ENCODE measurements at regions of chr4 and their contacts with region 1.

Region 1: DNA sequence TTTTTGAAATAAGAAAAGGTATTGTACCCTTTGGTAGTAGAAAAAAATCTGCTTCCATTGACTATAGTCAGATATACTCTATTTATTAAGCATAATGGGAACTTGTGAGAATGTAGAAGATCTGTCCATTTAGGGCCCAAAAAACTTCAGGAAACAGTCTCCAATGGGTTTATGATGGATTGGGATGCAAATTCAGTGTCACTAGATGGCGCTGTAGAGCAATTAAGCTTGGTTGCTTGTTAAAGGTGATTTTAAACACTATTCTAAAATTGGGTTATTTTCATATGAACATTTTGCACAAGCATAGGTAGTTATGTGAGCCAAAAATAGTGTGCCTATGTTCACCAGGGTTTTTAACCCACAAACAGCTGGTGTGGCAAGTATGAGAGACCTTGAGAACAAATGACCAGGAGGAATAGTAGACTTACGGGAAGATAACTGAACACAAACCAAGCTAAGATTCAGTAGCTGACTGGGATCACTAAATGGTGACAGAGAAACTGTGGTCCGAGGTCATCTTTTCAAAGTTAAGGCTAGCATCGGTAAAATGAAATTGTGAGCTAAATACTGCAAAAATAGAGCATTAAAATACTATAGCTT is 80.3 kb upstream of the LSM6 start:
- DNase-seq: no peak
- H3K4me3 Mint-ChIP-seq: no peak overlapping the region
- H3K27ac Mint-ChIP-seq: no peak overlapping the region
- H3K4me1 Mint-ChIP-seq: peaks cover 5% of the 10 kb centered on the region
- H3K27me3 Mint-ChIP-seq: peaks cover 17% of the 10 kb centered on the region

Region 2: GRCh38 chr4:146175541-146176453 is 80.6 kb after region 1 on chr4 and contains the start of gene LSM6:
- intact Hi-C with region 1: loop called (anchors 1 kb)
- DNase-seq: peak; percentile 78
- H3K4me3 Mint-ChIP-seq: peak within 1 kb of the TSS; percentile 86
- H3K27ac Mint-ChIP-seq: peak within 1 kb of the TSS; percentile 71
- H3K4me1 Mint-ChIP-seq: peaks cover 37% of the 10 kb centered on the region
- H3K27me3 Mint-ChIP-seq: no peaks in the 10 kb centered on the region
- total RNA-seq, gene LSM6: 67.2 and 74.1 TPM in 2 replicates

Region 3: DNA sequence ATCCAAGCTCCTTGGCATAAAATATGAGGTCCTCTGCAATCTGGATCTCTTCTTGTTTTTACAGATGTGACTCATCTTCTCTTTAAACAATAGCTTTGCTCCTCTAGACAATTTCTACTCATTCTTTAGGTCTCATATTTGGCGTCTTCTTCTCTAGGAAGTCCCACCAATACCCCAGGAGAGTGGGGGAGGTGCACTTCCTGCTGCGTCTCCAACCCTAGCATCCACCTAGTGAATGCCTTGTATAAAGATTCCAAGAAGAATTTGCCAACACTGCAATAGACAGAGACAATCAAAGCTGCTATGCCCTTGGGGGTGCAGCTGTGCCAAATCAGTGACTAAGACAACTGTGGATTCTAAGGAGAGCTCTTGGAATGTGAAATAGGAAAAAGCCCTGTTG is 472.2 kb after region 1 on chr4:
- intact Hi-C with region 1: no loop called
- DNase-seq: no peak
- H3K4me3 Mint-ChIP-seq: no peak overlapping the region
- H3K27ac Mint-ChIP-seq: no peak overlapping the region
- H3K4me1 Mint-ChIP-seq: no peaks in the 10 kb centered on the region
- H3K27me3 Mint-ChIP-seq: no peaks in the 10 kb centered on the region

Region 4: GRCh38 chr4:146916479-146917076 is 821.4 kb after region 1 on chr4:
- intact Hi-C with region 1: loop called (anchors 10 kb)
- DNase-seq: no peak
- H3K4me3 Mint-ChIP-seq: no peak overlapping the region
- H3K27ac Mint-ChIP-seq: no peak overlapping the region
- H3K4me1 Mint-ChIP-seq: no peaks in the 10 kb centered on the region
- H3K27me3 Mint-ChIP-seq: peaks cover 9% of the 10 kb centered on the region

Region 5: DNA sequence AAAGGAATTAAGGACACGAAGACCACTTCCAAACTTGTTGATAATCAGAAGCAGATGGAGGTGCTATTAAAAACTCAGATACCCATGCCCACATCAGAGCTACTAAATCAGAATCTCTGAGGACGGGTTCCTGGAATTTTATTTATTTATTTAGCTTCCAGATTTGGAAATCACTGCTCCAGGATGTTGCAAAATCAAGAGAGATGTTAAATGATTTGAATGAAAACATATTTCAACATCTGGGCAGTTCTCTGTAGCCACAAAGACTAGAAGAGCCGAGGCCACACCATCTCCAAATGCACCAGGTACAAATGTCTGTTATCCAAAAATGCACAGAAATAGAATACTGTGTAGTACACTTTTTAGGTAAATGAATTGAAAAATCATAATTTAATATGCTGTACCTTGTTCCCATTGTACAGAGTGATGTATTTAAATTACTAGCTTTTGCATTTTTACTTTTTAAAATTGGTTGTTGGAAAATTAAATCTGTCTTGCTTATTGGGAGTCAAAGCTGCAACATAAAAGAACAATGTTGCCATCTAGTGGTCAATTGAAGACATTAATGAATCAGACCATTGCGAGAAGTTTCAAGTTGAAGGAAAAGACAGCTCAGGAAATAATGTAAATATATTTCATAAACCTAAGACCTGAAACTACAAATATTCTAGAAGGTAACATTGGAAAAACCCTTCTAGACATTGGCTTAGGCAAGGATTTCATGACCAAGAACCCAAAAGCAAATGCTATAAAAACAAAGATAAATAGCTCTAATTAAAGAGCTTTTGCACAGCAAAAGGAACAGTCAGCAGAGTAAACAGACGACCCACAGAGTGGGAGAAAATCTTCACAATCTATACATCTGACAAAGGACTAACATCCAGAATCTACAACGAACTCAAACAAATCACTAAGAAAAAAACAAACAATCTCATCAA is 1001.7 kb after region 1 on chr4:
- intact Hi-C with region 1: loop called (anchors 5 kb)
- DNase-seq: no peak
- H3K4me3 Mint-ChIP-seq: no peak overlapping the region
- H3K27ac Mint-ChIP-seq: no peak overlapping the region
- H3K4me1 Mint-ChIP-seq: no peaks in the 10 kb centered on the region
- H3K27me3 Mint-ChIP-seq: no peaks in the 10 kb centered on the region

Measured in activated T-helper 2 cell treated with anti-CD3 and anti-CD28 coated beads, Interferon-gamma antibody, Interleukin-2, Interleukin-4, amounts not matched to agents 10 μg/mL and 5 μg/mL and 100 μg/mL, durations not matched to agents 14 hours and 24 hours and 36 hours (primary cell).